Activated T-helper 1 cell treated with anti-CD3 and anti-CD28 coated beads, Interleukin-12 subunit alpha, Interleukin-12 subunit beta, Interleukin-2, Interleukin-4 antibody, amounts not matched to agents 30 ng/mL and 10 ng/mL and 1 ng/mL, durations not matched to agents 14 hours and 24 hours and 36 hours (primary cell): ENCODE measurements at regions of chr2 and their contacts with region 1.

Region 1: GRCh38 chr2:9782197-9782719 is 61.0 kb upstream of the TAF1B start:
- DNase-seq: peak; percentile 76
- H3K4me3 Mint-ChIP-seq: peak overlapping the region; percentile 66
- H3K27ac Mint-ChIP-seq: peak overlapping the region; percentile 84
- H3K4me1 Mint-ChIP-seq: peaks cover 66% of the 10 kb centered on the region
- H3K27me3 Mint-ChIP-seq: no peaks in the 10 kb centered on the region

Region 2: DNA sequence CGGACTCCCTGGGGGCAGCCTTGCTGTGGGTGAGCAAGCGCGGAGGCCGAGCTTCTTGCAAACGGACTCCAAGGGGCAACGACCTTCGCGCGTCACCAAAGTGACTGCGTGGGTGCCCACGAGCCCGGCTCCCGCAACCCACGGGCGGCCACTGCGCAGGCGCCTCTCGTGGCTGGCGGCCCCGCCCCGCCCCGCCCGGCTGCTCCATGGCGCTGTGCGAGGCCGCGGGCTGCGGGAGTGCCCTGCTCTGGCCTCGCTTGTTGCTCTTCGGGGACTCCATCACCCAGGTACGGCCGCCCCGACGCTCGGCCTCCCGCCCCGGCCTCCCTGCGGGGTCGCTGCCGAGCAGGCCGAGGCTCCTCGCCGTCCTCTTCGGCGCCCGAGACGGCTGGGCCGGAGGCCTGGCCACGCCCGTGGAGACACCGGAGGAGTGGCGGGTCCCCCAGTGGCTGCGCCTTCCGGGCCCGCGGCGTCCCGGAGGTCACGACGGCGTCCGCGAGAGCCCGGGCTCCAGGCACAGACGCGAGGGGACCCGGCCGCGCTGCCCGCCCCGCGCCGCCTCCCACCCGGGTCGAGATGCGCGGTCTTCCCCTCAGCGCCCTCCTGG is 307.8 kb before region 1 on chr2 and contains the start of gene IAH1:
- intact Hi-C with region 1: loop called (anchors 5 kb)
- DNase-seq: peak; percentile 70
- H3K4me3 Mint-ChIP-seq: peak within 1 kb of the TSS; percentile 84
- H3K27ac Mint-ChIP-seq: peak within 1 kb of the TSS; percentile 84
- H3K4me1 Mint-ChIP-seq: peaks cover 48% of the 10 kb centered on the region
- H3K27me3 Mint-ChIP-seq: no peaks in the 10 kb centered on the region
- total RNA-seq, gene IAH1: 78.6 and 89.3 TPM in 2 replicates

Region 3: DNA sequence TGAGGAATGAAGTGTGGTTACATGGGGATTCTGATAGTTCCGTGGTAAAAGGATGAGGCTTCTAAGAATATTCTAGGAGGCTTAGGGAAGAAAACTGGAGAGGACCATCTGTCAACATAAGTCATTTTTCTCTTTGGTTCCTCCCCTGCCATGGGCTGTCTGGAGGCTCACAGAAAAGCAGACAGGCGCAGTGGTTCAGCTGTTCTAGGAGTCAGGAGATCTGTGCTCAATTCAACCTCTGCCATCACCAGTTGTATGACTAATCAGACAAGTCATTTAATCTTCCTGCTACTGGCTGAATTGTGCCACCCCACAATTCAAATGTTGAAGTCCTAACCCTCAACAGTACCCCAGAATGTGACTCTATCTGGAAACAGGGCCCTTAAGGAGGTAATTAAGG is 263.0 kb before region 1 on chr2:
- intact Hi-C with region 1: no loop called
- DNase-seq: no peak
- H3K4me3 Mint-ChIP-seq: no peak overlapping the region
- H3K27ac Mint-ChIP-seq: no peak overlapping the region
- H3K4me1 Mint-ChIP-seq: no peaks in the 10 kb centered on the region
- H3K27me3 Mint-ChIP-seq: no peaks in the 10 kb centered on the region

Region 4: GRCh38 chr2:9613291-9613690 is 169.0 kb before region 1 on chr2:
- intact Hi-C with region 1: loop called (anchors 1 kb)
- DNase-seq: no peak
- H3K4me3 Mint-ChIP-seq: no peak overlapping the region
- H3K27ac Mint-ChIP-seq: no peak overlapping the region
- H3K4me1 Mint-ChIP-seq: peaks cover 92% of the 10 kb centered on the region
- H3K27me3 Mint-ChIP-seq: no peaks in the 10 kb centered on the region

Region 5: GRCh38 chr2:9697909-9698308 is 84.3 kb before region 1 on chr2:
- intact Hi-C with region 1: loop called (anchors 1 kb)
- DNase-seq: no peak
- H3K4me3 Mint-ChIP-seq: peak overlapping the region; percentile 1
- H3K27ac Mint-ChIP-seq: peak overlapping the region; percentile 85
- H3K4me1 Mint-ChIP-seq: peaks cover 41% of the 10 kb centered on the region
- H3K27me3 Mint-ChIP-seq: no peaks in the 10 kb centered on the region

Region 6: DNA sequence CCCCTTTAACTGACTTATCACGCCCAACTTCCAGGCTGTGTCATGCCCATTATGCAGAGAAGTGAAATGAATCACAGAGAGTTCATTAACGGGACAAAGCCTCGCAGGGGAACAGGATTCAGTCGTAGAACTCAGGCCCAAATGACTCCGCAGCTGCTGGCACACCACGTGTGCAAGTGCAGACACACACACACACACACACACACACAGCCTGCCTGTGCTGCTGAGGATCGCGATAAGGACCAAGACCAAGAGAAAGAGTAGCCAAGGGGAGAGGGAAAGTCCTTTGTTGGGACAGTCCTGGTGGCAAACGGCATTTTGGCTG is 29.0 kb before region 1 on chr2:
- intact Hi-C with region 1: loop called (anchors 1 kb)
- DNase-seq: peak; percentile 45
- H3K4me3 Mint-ChIP-seq: peak overlapping the region; percentile 77
- H3K27ac Mint-ChIP-seq: peak overlapping the region; percentile 96
- H3K4me1 Mint-ChIP-seq: peaks cover 70% of the 10 kb centered on the region
- H3K27me3 Mint-ChIP-seq: peaks cover 34% of the 10 kb centered on the region

Region 7: GRCh38 chr2:9843229-9844035 is 61.2 kb after region 1 on chr2 and contains the start of gene TAF1B:
- intact Hi-C with region 1: loop called (anchors 1 kb)
- DNase-seq: peak; percentile 87
- H3K4me3 Mint-ChIP-seq: peak within 1 kb of the TSS; percentile 91
- H3K27ac Mint-ChIP-seq: peak within 1 kb of the TSS; percentile 93
- H3K4me1 Mint-ChIP-seq: peaks cover 46% of the 10 kb centered on the region
- H3K27me3 Mint-ChIP-seq: no peaks in the 10 kb centered on the region
- total RNA-seq, gene TAF1B: 23.3 and 25.1 TPM in 2 replicates

Region 8: GRCh38 chr2:9975805-9976447 is 193.7 kb after region 1 on chr2:
- intact Hi-C with region 1: loop called (anchors 1 kb)
- DNase-seq: no peak
- H3K4me3 Mint-ChIP-seq: no peak overlapping the region
- H3K27ac Mint-ChIP-seq: peak overlapping the region; percentile 4
- H3K4me1 Mint-ChIP-seq: peaks cover 72% of the 10 kb centered on the region
- H3K27me3 Mint-ChIP-seq: peaks cover 4% of the 10 kb centered on the region